PC-9 (cell line): ENCODE measurements at regions of chr11 and their contacts with region 1.

Region 1: GRCh38 chr11:75142714-75143419 is 8.0 kb upstream of the SLCO2B1 start:
- DNase-seq: peak in 1 of 2 experiments; percentile 53
- H3K4me3 ChIP-seq: no peak overlapping the region
- H3K27ac ChIP-seq: no peak overlapping the region
- H3K4me1 ChIP-seq: no peaks in the 10 kb centered on the region
- H3K27me3 ChIP-seq: peaks cover 42% of the 10 kb centered on the region
- CTCF ChIP-seq: no peak

Region 2: GRCh38 chr11:74929431-74930363 is 213.2 kb before region 1 on chr11:
- CTCF ChIA-PET with region 1: interaction called, 4 read pairs
- POLR2A ChIA-PET with region 1: no interaction called
- intact Hi-C with region 1: loop called (anchors 1 kb)
- DNase-seq: peak; percentile 55 to 72
- H3K4me3 ChIP-seq: no peak overlapping the region
- H3K27ac ChIP-seq: no peak overlapping the region
- H3K4me1 ChIP-seq: no peaks in the 10 kb centered on the region
- H3K27me3 ChIP-seq: no peaks in the 10 kb centered on the region
- CTCF ChIP-seq: peak; percentile 97

Region 3: DNA sequence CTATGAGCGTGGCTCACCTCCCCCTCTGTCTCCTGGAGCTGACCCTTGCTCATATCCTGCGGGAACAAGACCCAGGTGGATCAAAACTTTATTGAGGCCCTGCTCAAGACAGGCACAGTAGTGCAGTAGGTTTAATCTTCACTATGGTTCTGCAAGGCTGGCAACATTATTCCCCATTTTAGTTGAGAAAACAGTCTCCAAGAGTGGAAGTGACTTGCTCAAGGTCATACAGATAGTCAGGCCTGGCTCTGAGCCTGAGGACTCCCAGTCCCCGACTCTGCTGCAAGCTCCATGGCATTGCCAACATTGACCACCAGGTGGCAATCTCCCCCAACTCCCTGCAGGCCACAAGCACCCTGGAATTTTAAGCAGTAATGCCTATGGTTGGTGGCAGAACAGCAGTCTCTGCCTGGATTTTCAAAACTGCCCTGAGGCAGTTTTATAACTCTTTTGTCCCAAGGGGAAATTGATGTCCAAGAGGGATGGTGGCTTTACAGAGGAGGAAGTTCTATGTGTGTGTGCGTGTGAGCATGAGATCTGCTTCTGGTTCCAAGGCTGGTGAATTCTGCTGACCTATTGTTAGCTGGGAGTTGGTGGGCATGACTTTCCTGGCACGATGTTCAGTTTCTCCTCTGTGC is 120.0 kb before region 1 on chr11:
- CTCF ChIA-PET with region 1: interaction called, 4 read pairs
- POLR2A ChIA-PET with region 1: interaction called, 3 read pairs
- intact Hi-C with region 1: loop called (anchors 1 kb)
- DNase-seq: peak; percentile 69 to 87
- H3K4me3 ChIP-seq: no peak overlapping the region
- H3K27ac ChIP-seq: no peak overlapping the region
- H3K4me1 ChIP-seq: no peaks in the 10 kb centered on the region
- H3K27me3 ChIP-seq: peaks cover 33% of the 10 kb centered on the region; the same call in 1 of the 2 replicates
- CTCF ChIP-seq: peak; percentile 98

Region 4: DNA sequence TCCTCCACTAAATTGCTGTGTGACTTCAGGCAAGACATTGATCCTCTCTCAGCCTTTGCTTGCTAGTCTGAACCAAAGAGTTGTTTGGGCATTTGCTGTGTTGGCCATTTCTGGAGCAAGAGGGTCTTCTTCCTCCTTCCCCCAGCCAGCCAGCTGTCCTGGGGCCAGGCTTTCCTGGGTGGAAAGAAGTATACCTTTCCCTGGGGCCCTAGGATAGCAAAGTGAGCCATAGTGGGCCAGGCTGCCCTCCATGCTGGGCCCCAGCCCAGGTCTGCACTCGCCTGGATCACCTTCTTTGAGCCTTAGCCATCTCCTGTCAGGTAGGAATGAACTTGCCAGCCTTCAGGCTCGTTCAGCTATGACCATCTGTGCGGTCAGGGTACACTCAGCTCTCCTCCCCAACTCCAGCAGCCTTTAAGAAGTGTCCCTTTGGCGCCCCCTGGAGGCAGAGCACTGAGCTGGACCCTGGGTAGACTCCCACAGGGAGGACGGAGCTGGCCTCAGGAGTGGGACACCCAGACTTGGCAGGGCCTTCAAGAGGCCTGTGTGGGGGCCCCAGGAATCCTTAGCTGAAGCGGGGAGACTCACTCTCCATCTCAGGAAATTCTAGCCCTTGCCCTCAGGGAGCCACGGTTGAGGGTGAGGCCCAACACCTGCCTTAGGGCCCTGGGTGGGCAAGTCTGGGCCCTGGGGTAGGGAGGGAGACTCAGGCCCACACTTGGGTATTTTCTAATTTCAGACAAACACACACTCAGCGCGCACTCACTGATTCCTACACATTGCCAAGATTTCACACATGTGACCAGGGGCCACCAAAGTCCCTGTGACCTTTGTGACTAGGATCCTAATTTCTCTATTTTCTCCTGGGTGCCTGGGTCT is 62.1 kb after region 1 on chr11:
- CTCF ChIA-PET with region 1: interaction called, 12 read pairs
- POLR2A ChIA-PET with region 1: interaction called, 3 read pairs
- intact Hi-C with region 1: loop called (anchors 2 kb)
- DNase-seq: peak; percentile 60 to 80
- H3K4me3 ChIP-seq: no peak overlapping the region
- H3K27ac ChIP-seq: no peak overlapping the region
- H3K4me1 ChIP-seq: no peaks in the 10 kb centered on the region
- H3K27me3 ChIP-seq: peaks cover 75% of the 10 kb centered on the region
- CTCF ChIP-seq: peak; percentile 95

Region 5: GRCh38 chr11:75270896-75271418 is 128.1 kb after region 1 on chr11:
- CTCF ChIA-PET with region 1: interaction called, 15 read pairs
- POLR2A ChIA-PET with region 1: no interaction called
- intact Hi-C with region 1: no loop called
- DNase-seq: no peak
- H3K4me3 ChIP-seq: no peak overlapping the region
- H3K27ac ChIP-seq: no peak overlapping the region
- H3K4me1 ChIP-seq: no peaks in the 10 kb centered on the region
- H3K27me3 ChIP-seq: no peaks in the 10 kb centered on the region
- CTCF ChIP-seq: peak; percentile 68; the same call in 1 of the 2 replicates

Region 6: DNA sequence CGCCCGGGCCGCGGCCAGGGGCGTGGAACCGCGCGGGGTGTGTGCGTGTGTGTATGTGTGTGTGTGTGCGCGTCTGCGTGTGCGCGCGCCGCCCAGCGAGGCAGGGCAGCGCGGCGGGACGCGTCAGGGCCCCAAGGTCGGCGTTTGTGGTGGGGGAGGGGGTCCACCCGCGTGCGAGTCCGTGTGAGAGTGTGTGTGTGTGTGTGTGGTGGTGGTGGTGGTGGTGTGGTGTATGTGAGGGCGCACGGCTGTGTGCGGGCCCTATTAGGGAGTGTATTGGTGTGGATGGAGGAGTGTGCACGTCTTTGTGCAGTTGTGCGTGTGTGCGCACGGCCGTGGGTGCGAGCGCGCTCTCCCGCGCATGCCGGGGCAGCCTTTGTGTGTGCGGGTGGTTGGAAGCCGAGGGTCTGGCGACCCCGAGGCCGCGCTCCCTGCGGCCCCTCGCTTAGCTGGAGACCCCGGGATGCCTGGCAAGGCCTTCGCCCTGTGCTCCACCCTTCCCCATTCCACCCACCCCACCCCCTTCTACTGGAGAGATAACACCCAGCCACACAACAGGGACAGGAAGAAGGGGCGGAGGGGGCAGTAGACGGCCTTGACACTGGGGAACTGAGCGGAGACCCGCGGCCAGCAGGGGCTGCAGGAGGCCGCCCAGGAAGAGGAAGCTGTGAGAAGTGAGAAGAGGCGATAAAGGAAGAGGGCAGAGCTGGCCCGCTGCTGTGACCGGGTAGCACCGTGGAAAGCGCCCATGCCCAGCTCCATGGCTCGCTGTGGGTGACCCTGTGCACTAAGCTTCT is 209.1 kb after region 1 on chr11:
- CTCF ChIA-PET with region 1: no interaction called
- POLR2A ChIA-PET with region 1: no interaction called
- intact Hi-C with region 1: no loop called
- DNase-seq: no peak
- H3K4me3 ChIP-seq: peak overlapping the region; percentile 87
- H3K27ac ChIP-seq: no peak overlapping the region
- H3K4me1 ChIP-seq: peaks cover 59% of the 10 kb centered on the region
- H3K27me3 ChIP-seq: no peaks in the 10 kb centered on the region
- CTCF ChIP-seq: no peak; the same call in 1 of the 2 replicates